Vagina (tissue), 2 donors: ENCODE measurements at regions of chr1 and their contacts with region 1.

Region 1: GRCh38 chr1:220089650-220090556 is at the start of gene BPNT1:
- DNase-seq: peak; percentile 91 to 97
- H3K4me3 ChIP-seq: peak within 1 kb of the TSS; percentile 50 to 51
- H3K27ac ChIP-seq: peak within 1 kb of the TSS; percentile 9
- H3K4me1 ChIP-seq: peaks cover 12% of the 10 kb centered on the region
- H3K27me3 ChIP-seq: no peaks in the 10 kb centered on the region
- CTCF ChIP-seq: peak in 1 of 3 experiments; percentile 33
- POLR2A ChIP-seq: peak in 1 of 2 donors; percentile 75
- total RNA-seq, gene BPNT1: 26.5 TPM

Region 2: GRCh38 chr1:220046052-220046930 is 43.6 kb before region 1 on chr1 and contains the start of gene EPRS1:
- intact Hi-C with region 1: loop called (anchors 5 kb)
- DNase-seq: peak in 1 of 2 donors; percentile 94
- H3K4me3 ChIP-seq: peak within 1 kb of the TSS; percentile 76 to 94
- H3K27ac ChIP-seq: peak within 1 kb of the TSS; percentile 81
- H3K4me1 ChIP-seq: peaks cover 13% of the 10 kb centered on the region
- H3K27me3 ChIP-seq: no peaks in the 10 kb centered on the region
- CTCF ChIP-seq: peak in 2 of 3 experiments; percentile 42 to 80
- POLR2A ChIP-seq: peak in 1 of 2 donors; percentile 29
- total RNA-seq, gene EPRS1: 36.3 TPM